ENCODE measurements at regions of chr22 and their contacts with region 1.

Region 1: DNA sequence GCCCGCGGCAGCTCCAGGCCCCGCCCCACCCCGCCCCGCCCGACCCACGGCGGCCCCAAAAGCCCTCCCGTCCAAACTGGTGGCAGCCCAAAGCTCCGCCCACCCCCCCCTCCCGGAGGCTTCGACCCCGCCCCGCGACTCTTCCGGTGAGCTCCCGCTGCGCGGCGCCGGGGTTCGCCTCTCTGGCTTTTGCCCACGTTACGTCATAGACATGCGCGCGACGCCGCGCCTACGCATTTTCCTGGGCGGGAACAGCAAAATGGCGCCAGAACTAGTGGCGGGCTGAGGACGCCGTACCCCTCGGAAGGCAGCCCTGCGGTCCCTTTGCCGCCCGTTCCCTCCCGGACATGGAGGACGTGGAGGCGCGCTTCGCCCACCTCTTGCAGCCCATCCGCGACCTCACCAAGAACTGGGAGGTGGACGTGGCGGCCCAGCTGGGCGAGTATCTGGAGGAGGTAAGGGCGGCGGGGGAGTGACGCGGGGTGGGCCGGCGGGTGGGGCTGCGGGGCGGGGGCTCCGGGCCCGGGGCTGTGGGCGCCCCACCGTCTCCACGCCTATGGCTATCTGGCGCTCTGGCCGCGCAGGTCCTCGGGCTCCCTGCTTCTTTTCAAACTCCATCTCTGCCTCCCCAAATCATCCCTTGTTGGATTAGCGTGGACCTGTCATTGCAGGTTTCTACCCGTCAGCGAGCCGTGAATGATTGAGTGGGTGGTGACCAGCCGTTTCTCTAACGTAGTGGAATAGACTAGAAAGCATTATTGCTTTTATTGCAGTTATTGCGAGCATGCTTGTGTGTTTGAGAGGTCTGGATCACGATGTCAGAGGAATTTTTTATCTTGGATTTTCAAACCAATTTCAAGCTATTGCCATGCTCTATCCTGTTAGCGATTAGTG is at the start of gene NCAPH2:
- DNase-seq: peak; percentile 99
- H3K4me3 ChIP-seq: peak within 1 kb of the TSS; percentile 100
- H3K27ac ChIP-seq: peak within 1 kb of the TSS; percentile 59
- H3K4me1 ChIP-seq: peaks cover 27% of the 10 kb centered on the region
- CTCF ChIP-seq: no peak
- total RNA-seq, gene NCAPH2: 129 and 151 TPM in 2 replicates

Region 2: GRCh38 chr22:50244420-50245213 is 263.6 kb before region 1 on chr22 and contains the start of gene TUBGCP6:
- CTCF ChIA-PET with region 1: no interaction called
- POLR2A ChIA-PET with region 1: no interaction called
- intact Hi-C with region 1: loop called (anchors 10 kb)
- DNase-seq: peak; percentile 94
- H3K4me3 ChIP-seq: peak within 1 kb of the TSS; percentile 81
- H3K27ac ChIP-seq: peak within 1 kb of the TSS; percentile 62
- H3K4me1 ChIP-seq: peaks cover 42% of the 10 kb centered on the region
- CTCF ChIP-seq: 0 out of 2 replicates have a peak, but pooled peaks have one; percentile 37
- total RNA-seq, gene TUBGCP6: 52.8 and 57.7 TPM in 2 replicates

Region 3: DNA sequence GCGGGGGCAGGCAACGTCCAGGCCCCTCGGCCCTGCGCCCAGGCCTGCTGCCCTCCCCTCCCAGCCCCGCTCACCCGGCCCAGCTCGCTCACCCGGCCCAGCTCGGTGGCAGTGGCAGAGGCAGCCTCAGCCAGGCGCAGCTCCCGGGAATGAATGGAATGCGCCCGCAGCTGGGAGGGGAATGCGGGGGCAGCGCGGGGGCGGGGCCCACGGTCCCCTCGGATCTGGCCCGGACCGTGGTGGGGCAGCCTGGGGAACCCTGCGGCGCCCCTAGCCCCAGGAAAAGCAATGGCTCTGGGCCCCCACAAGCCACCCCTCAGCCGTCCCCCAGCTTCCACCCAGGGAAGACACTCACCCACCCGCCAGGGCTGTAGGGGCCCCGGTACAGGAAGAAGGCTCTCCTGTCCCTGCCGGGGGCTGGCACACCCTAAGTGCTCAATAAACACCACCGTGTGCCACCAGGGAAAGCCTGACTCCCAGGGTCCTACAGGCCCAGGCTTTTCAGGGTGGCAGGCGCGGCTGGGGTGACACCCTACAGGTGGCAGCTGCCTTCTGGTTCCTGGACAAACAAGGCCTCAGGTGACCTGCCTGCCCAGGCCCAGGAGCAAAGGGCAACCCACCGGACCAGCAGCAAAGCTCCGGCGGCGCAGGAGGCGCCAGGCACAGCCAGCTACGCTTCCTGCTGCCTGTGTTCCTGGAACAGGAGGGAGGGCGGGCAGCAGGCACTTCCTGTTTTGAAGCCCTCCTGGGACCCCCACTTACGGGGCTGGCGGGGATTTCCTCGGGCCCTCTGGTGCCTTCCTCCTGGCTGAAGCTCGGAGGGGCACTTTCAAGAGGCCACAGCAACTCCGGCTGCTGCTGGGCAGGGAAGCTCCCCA is 214.6 kb before region 1 on chr22:
- CTCF ChIA-PET with region 1: no interaction called
- POLR2A ChIA-PET with region 1: no interaction called
- intact Hi-C with region 1: no loop called
- DNase-seq: peak; percentile 65
- H3K4me3 ChIP-seq: peak overlapping the region; percentile 65
- H3K27ac ChIP-seq: peak overlapping the region; percentile 65
- H3K4me1 ChIP-seq: peaks cover 56% of the 10 kb centered on the region
- CTCF ChIP-seq: no peak

Region 4: DNA sequence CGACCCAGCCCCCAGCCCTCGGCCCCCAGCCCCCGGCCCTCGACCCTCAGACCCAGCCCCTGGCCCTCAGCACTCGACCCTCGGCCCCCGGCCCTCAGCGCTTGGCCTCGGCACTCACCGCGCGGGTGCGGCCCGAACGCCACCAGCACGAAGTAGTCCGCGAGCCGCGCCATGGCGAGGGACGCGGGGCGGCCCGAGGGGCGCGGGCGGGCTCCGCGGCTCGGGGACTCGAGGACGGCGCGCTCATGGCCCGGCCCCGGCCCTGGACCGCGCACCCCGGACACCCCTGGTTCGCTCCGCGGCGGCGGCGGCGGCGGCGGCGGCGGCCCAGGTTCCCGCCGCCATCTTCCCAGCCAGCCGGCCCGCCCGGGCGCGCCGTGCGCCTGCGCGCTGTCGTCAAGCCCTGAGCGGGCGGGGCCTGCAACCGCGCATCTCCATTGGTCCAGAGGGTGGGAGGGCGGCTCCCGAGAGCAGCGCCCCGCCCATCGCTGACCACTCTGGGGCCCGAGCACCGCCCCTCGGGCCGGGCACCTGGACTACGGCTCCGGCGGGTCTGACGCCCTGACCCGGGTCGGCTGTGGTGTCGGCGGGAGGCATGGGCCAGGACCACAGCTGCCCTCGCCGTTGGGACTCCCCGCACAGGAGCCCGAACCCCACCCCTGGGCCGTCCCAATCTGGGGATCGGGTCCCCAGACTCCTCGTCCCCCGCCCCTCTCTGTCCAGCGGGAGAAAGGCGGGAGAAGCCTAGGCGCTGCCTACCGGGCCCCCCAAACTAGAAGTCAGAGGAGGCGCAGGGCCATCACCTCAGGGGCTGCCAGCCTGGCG is 33.4 kb before region 1 on chr22 and contains the start of gene SBF1:
- CTCF ChIA-PET with region 1: interaction called, 4 read pairs
- POLR2A ChIA-PET with region 1: interaction called, 7 read pairs
- intact Hi-C with region 1: loop called (anchors 2 kb)
- DNase-seq: peak; percentile 92
- H3K4me3 ChIP-seq: peak within 1 kb of the TSS; percentile 96
- H3K27ac ChIP-seq: peak within 1 kb of the TSS; percentile 95
- H3K4me1 ChIP-seq: peaks cover 46% of the 10 kb centered on the region
- CTCF ChIP-seq: no peak
- total RNA-seq, gene SBF1: 134 and 177 TPM in 2 replicates